ENCODE measurements at regions of chr20 and their contacts with region 1.

Region 1: GRCh38 chr20:13546497-13547131 is 92.1 kb downstream of the TASP1 start:
- DNase-seq: peak; percentile 75
- H3K4me3 Mint-ChIP-seq: no peak overlapping the region
- H3K27ac Mint-ChIP-seq: no peak overlapping the region
- H3K4me1 Mint-ChIP-seq: no peaks in the 10 kb centered on the region
- H3K27me3 Mint-ChIP-seq: no peaks in the 10 kb centered on the region
- CTCF ChIP-seq: peak; percentile 60

Region 2: DNA sequence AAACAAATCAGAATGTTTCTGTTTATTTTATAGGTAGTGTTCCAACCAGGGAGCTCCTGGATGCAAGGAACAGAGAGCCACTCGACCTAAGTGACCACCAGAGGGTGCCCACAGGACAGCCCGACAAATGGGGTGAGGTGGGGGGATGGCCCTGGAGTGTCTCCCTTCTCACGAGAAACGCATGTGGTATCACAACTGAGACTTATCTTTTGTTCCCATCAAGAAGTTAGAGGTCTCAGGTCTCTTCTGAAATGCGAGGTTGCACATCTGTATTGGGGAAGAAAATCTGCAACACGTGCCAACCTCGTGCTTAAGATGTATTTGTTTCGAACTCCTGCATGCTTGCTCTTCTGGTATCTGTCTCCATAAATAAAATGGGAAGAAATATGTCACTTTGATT is 221.6 kb before region 1 on chr20:
- CTCF ChIA-PET with region 1: interaction called, 48 read pairs
- intact Hi-C with region 1: loop called (anchors 1 kb)
- DNase-seq: peak; percentile 67
- H3K4me3 Mint-ChIP-seq: no peak overlapping the region
- H3K27ac Mint-ChIP-seq: no peak overlapping the region
- H3K4me1 Mint-ChIP-seq: peaks cover 21% of the 10 kb centered on the region
- H3K27me3 Mint-ChIP-seq: no peaks in the 10 kb centered on the region
- CTCF ChIP-seq: peak; percentile 68

Region 3: DNA sequence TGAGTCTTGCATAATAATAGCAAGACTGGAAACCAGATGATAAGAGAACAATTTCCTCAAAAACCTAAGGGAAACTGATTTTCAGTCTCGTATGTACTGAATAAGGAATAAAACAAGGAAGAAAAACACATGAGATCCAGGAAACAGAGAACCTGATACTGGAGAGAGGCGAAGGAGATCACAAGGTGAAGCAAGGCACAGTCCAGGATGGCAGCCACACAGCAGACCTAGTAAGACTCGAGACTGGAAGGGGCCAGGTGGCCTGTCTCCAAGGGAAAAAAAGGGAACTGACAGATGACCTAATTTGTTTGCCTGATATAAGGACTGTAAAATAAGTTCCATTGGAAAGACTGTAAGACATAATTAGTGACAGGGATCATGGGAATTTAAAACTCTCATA is 21.0 kb after region 1 on chr20:
- CTCF ChIA-PET with region 1: no interaction called
- intact Hi-C with region 1: no loop called
- DNase-seq: no peak
- H3K4me3 Mint-ChIP-seq: no peak overlapping the region
- H3K27ac Mint-ChIP-seq: no peak overlapping the region
- H3K4me1 Mint-ChIP-seq: no peaks in the 10 kb centered on the region
- H3K27me3 Mint-ChIP-seq: no peaks in the 10 kb centered on the region
- CTCF ChIP-seq: no peak

Region 4: GRCh38 chr20:13610184-13610583 is 63.6 kb after region 1 on chr20:
- CTCF ChIA-PET with region 1: no interaction called
- intact Hi-C with region 1: no loop called
- DNase-seq: peak; percentile 4
- H3K4me3 Mint-ChIP-seq: no peak overlapping the region
- H3K27ac Mint-ChIP-seq: no peak overlapping the region
- H3K4me1 Mint-ChIP-seq: no peaks in the 10 kb centered on the region
- H3K27me3 Mint-ChIP-seq: no peaks in the 10 kb centered on the region
- CTCF ChIP-seq: no peak

Measured in Calu3 (cell line).